ENCODE measurements at regions of chr4 and their contacts with region 1.

Region 1: GRCh38 chr4:53763813-53764597 is 172.7 kb upstream of the LNX1 start:
- DNase-seq: peak; percentile 68
- H3K4me3 ChIP-seq: peak overlapping the region; percentile 11; the same call in 1 of the 2 replicates
- H3K27ac ChIP-seq: peak overlapping the region; percentile 89
- H3K27me3 ChIP-seq: no peaks in the 10 kb centered on the region
- CTCF ChIP-seq: no peak

Region 2: GRCh38 chr4:53786632-53787031 is 22.6 kb after region 1 on chr4:
- CTCF ChIA-PET with region 1: no interaction called
- POLR2A ChIA-PET with region 1: interaction called, 11 read pairs
- DNase-seq: peak; percentile 92
- H3K4me3 ChIP-seq: no peak overlapping the region
- H3K27ac ChIP-seq: peak overlapping the region; percentile 84
- H3K27me3 ChIP-seq: no peaks in the 10 kb centered on the region
- CTCF ChIP-seq: no peak

Region 3: DNA sequence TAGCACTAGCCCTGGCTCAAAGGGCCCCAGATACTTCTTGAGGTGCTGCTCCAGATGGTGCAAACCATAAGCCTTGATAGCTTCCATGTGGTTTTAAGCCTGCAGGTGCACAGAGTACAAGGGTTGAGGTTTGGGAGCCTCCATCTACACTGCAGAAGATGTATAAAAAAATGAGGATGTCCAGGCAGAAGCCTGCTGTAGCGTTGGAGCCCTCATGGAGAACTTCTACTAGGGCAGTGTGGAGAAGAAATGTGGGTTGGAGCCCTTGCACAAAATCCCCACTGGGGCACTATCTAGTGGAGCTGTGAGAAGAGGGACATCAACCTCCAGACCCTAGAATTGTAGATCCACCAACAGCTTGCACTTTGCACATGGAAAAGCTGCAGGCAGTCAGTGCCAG is 68.5 kb after region 1 on chr4:
- CTCF ChIA-PET with region 1: no interaction called
- POLR2A ChIA-PET with region 1: no interaction called
- DNase-seq: no peak
- H3K4me3 ChIP-seq: no peak overlapping the region
- H3K27ac ChIP-seq: no peak overlapping the region
- H3K27me3 ChIP-seq: no peaks in the 10 kb centered on the region
- CTCF ChIP-seq: no peak

Measured in AG04450 (cell line).